PC-3 (cell line): ENCODE measurements at regions of chr14 and their contacts with region 1.

Region 1: DNA sequence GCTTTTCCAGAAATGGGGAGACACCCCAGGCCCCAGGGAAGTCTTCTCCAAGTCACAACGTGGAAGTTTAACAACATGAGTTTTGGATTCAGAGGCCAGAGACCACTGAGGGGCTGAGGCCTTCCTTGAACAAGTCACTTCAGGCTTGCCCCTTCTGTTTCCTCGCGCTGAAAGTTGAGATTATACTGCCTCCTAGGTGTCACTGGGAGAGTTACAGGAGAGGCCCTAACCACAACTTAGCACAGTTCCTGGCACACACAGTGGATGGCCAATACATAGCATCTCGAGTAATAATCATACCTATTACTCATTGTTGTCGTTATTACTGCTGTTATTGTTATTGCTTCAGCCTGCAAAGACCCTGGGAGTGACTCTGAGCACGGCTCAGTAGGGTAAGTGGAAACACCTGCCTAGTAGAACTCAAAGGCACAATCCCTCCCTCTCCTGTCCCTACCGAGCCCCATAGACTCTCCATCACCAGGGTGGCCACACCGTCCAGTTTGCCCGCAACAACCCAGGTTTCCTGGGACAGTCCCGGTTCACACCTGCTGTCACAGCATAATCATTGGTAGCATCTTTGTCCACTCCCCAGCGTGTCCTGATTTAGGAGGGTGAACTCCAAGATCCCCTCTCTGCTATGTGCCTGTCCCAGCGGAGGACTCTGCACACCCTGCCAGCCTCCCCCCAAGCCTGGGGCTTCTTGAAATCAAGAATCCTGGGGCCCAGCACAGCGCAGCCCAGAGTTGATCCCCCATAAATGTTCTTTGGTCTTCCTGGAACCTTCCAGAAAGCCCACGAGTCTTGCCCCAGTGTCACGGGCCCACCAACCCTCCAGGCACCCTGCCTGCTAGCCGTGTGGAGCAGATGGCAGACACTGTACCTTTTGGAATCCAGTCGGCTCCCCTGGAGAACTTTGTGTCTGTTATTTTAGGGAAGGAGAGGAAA is 85.0 kb downstream of the SYNE3 start:
- DNase-seq: peak; percentile 44
- ATAC-seq: no peak
- H3K4me3 ChIP-seq: no peak overlapping the region
- H3K27ac ChIP-seq: no peak overlapping the region
- H3K4me1 ChIP-seq: no peaks in the 10 kb centered on the region
- H3K27me3 ChIP-seq: no peaks in the 10 kb centered on the region
- CTCF ChIP-seq: peak; percentile 73

Region 2: DNA sequence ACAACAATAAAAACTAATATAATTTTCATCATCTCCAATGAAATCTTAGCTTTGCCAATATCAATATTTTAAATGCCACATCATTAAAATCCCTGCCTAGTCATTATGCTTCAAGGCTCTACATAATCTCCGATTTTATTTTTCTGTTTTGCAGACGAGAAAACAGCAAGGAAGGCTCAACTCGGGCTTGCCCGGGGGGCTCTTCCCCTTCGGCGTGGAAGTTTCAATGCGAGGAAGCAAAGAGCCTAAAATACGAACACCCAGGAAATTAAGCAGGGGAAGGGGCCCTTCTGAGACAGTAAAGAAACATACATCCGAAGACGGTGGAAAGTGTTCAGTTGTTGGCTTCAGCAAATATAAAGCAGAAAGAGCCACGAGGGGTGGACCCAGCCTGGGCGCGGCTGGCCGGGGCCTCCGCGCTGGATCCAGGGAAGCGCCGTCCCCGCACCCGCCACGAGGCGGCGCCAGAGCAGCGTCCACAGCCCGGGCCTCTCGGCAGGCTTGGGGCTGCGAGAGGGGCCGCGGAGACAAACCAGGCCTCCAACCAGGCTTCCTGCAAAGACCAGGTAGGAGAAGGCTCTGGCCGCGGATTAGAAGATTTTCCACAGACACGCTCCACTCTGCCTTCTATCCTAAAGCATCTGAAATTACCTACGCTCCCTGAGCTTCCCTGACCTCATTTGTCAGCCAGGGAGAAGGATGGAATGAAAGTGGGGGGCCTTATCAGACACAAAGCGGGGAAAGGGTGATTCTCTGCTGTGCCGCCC is 742.1 kb before region 1 on chr14:
- CTCF ChIA-PET with region 1: no interaction called
- POLR2A ChIA-PET with region 1: no interaction called
- intact Hi-C with region 1: loop called (anchors 5 kb)
- DNase-seq: peak; percentile 48
- ATAC-seq: peak; percentile 81
- H3K4me3 ChIP-seq: peak overlapping the region; percentile 50
- H3K27ac ChIP-seq: no peak overlapping the region
- H3K4me1 ChIP-seq: no peaks in the 10 kb centered on the region
- H3K27me3 ChIP-seq: no peaks in the 10 kb centered on the region
- CTCF ChIP-seq: peak; percentile 84

Region 3: DNA sequence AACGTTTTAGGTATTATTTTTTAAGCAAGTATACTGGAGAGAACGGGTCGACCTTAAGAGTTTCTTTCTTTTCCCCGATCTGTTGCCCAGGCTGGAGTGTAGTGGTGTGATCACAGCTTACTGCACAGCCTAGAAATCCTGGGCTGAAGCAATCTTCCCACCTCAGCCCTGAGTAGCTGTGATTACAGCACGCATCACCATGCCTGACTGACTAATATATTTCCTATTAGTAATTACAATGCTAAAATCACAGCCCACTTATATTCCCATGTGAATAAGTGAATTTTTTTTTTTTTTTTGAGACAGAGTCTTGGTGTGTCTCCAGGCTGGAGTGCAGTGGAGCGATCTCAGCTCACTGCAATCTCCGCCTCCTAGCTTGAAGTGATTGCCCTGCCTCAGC is 324.5 kb before region 1 on chr14:
- CTCF ChIA-PET with region 1: no interaction called
- POLR2A ChIA-PET with region 1: no interaction called
- intact Hi-C with region 1: loop called (anchors 10 kb)
- DNase-seq: peak; percentile 5
- ATAC-seq: 0 out of 2 replicates have a peak, but pooled peaks have one; percentile 29
- H3K4me3 ChIP-seq: no peak overlapping the region
- H3K27ac ChIP-seq: no peak overlapping the region
- H3K4me1 ChIP-seq: peaks cover 8% of the 10 kb centered on the region
- H3K27me3 ChIP-seq: no peaks in the 10 kb centered on the region
- CTCF ChIP-seq: no peak

Region 4: GRCh38 chr14:95265106-95266094 is 166.1 kb before region 1 on chr14:
- CTCF ChIA-PET with region 1: no interaction called
- POLR2A ChIA-PET with region 1: interaction called, 22 read pairs
- intact Hi-C with region 1: no loop called
- DNase-seq: peak; percentile 98
- ATAC-seq: peak; percentile 96
- H3K4me3 ChIP-seq: peak overlapping the region; percentile 16; the same call in 1 of the 2 replicates
- H3K27ac ChIP-seq: peak overlapping the region; percentile 90
- H3K4me1 ChIP-seq: peaks cover 33% of the 10 kb centered on the region
- H3K27me3 ChIP-seq: no peaks in the 10 kb centered on the region
- CTCF ChIP-seq: no peak

Region 5: DNA sequence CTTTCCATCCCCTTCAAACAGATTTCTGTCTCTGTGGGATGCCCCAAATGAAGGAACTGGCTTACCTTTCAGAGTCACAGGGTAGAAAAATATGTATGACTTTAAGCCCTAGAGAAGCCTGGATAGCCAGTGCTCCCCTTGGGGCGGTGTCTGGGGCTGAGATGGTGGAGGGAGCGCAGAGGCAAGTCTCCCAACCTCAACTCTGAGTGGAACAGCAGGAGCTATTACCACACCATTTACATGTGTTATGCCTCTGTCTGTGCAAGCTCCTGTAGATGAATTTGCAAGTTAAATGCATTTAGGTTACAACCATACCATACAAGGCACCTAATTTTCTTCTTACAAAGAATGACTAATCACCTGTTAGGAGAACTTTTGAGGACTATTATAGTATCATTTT is 61.4 kb before region 1 on chr14:
- CTCF ChIA-PET with region 1: no interaction called
- POLR2A ChIA-PET with region 1: no interaction called
- intact Hi-C with region 1: no loop called
- DNase-seq: no peak
- ATAC-seq: no peak
- H3K4me3 ChIP-seq: no peak overlapping the region
- H3K27ac ChIP-seq: no peak overlapping the region
- H3K4me1 ChIP-seq: no peaks in the 10 kb centered on the region
- H3K27me3 ChIP-seq: no peaks in the 10 kb centered on the region
- CTCF ChIP-seq: no peak

Region 6: DNA sequence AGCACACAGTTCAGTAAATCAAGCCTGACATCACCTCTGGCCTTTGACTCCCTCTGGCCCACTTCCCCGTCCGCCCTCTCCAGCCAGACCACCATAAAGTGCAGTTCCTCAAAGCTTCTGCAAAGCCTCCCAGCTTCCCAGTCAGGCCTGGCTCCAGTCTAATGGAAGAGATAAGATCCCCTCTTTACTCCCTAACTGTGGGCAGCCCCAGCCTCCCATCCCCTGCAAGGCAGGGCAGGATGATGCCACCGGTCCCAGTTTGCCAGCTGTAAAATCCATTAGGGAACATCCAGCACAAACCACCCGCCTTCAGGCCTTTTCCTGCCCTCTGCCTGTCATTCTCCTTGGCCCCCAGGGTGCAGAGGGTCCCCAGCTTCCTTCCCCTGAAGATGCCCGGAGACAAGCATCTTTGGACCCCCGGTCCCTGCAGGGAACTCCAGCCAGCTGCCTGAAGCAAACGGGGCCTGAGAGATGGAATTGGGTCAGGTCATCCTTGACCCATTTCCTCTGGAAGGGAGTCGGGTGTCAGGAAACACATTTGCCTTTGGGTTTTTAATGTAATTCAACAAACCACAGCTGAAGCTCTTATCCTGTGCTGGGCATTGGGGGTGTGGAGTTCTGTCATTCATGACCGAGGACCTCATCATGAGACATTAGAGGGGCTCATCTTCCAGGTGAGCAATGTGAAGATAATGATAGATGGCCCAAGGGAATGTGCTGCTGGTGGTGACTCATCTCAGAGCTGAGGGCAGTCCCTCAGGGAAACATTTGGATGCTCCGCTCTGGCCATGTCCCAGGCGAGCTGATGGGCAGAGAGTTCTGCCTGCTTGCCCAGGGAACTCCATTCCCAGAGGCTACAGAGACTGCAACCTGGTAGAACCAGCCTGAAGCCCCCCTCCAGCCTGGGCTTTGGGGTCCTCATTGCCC is 17.9 kb before region 1 on chr14:
- CTCF ChIA-PET with region 1: no interaction called
- POLR2A ChIA-PET with region 1: no interaction called
- intact Hi-C with region 1: no loop called
- DNase-seq: peak; percentile 50
- ATAC-seq: no peak
- H3K4me3 ChIP-seq: no peak overlapping the region
- H3K27ac ChIP-seq: no peak overlapping the region
- H3K4me1 ChIP-seq: no peaks in the 10 kb centered on the region
- H3K27me3 ChIP-seq: 0 out of 2 replicates have a peak, but pooled peaks cover 3% of the 10 kb centered on the region
- CTCF ChIP-seq: no peak

Region 7: DNA sequence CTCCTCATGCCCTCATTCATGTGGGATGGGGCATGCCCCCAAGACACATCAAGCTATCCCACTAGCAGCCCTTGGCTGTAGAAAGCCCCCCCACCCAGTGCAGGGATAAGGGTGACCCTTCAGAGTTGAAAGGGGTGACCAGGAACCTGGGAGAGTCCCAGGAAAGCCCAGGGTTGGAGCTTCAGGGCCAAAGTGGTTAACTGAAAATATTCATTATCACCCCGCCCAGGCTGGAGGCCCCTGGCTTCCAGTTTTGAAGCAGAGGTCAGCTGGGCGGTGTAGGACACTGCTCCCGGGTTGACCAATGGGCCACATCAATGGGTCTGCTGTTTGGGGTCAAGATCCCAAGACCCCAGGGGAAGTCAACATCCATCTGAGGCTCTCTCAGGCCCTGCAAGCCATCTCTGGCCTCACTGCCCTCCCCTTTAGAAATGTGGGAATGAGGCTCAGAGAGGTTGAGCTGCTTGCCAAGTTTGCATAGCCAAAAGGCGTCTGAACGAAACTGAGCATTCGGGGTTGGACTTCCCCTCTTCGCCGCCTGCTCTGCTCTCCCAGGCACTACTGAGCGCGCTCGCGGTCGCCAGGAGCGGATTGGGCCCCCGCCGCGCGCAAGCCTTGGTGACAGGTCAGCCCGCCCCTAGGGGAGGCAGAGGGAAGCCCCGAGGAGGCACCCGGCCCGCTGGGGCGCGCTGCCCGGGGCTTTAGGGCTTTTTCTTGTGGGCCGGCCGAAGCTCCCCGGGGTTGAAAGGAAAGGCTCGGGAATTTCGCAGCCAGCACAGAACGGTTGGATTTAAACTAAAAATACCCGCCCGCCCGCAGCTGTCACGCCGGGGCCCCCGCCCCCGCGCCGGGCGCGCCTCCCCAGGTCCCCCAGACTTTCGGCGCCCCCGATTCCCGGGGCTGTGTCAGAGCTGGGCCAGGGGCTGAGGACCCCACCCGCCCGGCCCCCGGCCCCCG is 84.4 kb after region 1 on chr14:
- CTCF ChIA-PET with region 1: no interaction called
- POLR2A ChIA-PET with region 1: no interaction called
- intact Hi-C with region 1: no loop called
- DNase-seq: peak; percentile 40
- ATAC-seq: peak; percentile 58
- H3K4me3 ChIP-seq: peak overlapping the region; percentile 75
- H3K27ac ChIP-seq: no peak overlapping the region
- H3K4me1 ChIP-seq: peaks cover 20% of the 10 kb centered on the region
- H3K27me3 ChIP-seq: no peaks in the 10 kb centered on the region
- CTCF ChIP-seq: peak; percentile 31; the same call in 1 of the 2 replicates